ENCODE measurements at regions of chr6 and their contacts with region 1.

Region 1: DNA sequence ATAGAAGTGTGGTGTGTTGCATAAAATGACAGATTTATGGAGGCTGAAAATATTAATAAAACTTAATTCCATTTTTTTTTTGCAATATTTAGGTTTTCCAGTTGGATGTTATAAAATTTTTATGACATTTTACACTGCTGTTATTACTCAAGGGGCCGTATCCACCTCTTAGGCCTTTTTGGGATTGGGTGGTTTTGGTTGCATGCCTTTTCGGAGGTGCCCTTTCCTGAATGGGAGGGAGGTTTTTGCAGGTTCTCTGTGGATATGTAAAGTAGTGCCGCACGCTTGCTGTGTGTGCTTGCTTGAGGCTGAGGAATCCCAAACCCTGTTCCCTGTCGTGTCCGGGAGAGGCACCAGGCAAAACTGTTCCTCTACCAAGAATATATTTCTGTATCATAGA is 6.8 kb downstream of the ARID1B start:
- DNase-seq: no peak
- H3K4me3 Mint-ChIP-seq: peak overlapping the region; percentile 14
- H3K27ac Mint-ChIP-seq: no peak overlapping the region
- H3K4me1 Mint-ChIP-seq: peaks cover 59% of the 10 kb centered on the region
- H3K27me3 Mint-ChIP-seq: no peaks in the 10 kb centered on the region

Region 2: GRCh38 chr6:156760377-156760776 is 23.6 kb before region 1 on chr6:
- CTCF ChIA-PET with region 1: no interaction called
- POLR2A ChIA-PET with region 1: no interaction called
- DNase-seq: no peak
- H3K4me3 Mint-ChIP-seq: no peak overlapping the region
- H3K27ac Mint-ChIP-seq: no peak overlapping the region
- H3K4me1 Mint-ChIP-seq: no peaks in the 10 kb centered on the region
- H3K27me3 Mint-ChIP-seq: peaks cover 6% of the 10 kb centered on the region

Region 3: DNA sequence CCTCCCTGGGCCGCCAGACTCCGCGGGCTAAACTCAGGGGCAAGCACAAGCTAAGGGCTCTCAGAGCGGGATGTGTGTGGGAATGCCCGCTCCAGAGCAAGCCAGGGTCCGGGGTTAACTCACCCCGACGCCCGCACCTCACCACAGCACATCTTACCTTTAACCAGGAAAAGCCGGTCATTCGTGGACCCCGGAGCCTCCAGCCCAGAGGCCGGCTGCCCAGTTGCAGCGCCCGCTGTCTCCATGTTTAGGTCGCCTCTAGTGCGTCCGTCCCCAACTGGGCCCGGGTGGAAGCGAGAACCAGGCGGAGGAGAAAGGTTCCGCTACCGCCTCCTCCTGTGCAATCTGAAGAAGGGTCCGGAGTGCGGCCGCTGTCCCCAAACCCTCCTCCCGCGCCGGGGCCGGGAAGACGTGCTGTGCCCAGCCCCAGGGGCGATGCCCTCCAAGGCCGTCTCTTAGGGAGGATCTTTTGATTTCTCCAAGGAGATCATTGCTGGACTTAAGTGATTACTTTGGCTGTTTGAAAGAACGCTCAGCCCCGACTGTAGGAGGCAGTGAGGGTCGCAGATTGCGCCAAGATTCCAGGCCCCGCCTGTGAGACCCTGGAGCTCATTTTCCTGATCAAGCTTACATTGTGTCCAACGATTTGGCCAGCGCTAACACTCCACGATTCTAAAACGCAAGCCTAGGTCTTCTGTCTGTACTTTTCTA is 539.5 kb after region 1 on chr6 and contains the start of gene TMEM242:
- CTCF ChIA-PET with region 1: no interaction called
- POLR2A ChIA-PET with region 1: interaction called, 10 read pairs
- DNase-seq: peak; percentile 89
- H3K4me3 Mint-ChIP-seq: peak within 1 kb of the TSS; percentile 98
- H3K27ac Mint-ChIP-seq: peak within 1 kb of the TSS; percentile 91
- H3K4me1 Mint-ChIP-seq: peaks cover 31% of the 10 kb centered on the region
- H3K27me3 Mint-ChIP-seq: peaks cover 31% of the 10 kb centered on the region
- total RNA-seq, gene TMEM242: 7.9 to 9.0 TPM